Caco-2 (cell line): ENCODE measurements at regions of chr10 and their contacts with region 1.

Region 1: DNA sequence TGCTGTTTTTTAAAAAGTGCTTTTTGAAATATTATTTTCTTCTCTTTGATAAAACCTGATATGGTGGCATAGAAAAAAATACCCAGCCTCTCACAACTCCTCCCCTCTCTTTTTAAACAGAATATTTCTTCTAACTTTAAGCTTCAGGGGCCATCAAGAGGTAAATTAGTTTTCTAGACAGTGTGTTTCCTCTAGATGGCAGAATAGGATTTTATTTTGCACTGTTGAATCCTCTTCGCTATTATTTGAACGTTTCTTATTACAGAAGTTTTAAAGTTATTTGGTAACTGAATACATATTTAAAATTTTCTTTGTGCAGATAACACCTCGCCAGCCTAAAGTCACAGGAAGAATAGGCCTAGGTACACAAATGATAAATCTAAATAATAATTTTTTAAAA is 30.3 kb downstream of the ARL5B start:
- DNase-seq: no peak
- H3K4me3 ChIP-seq: no peak overlapping the region
- H3K4me3 Mint-ChIP-seq: no peak overlapping the region
- H3K27ac Mint-ChIP-seq: no peak overlapping the region
- H3K4me1 ChIP-seq: no peaks in the 10 kb centered on the region
- H3K4me1 Mint-ChIP-seq: peaks cover 7% of the 10 kb centered on the region
- H3K27me3 ChIP-seq: no peaks in the 10 kb centered on the region
- H3K27me3 Mint-ChIP-seq: no peaks in the 10 kb centered on the region
- CTCF ChIP-seq: peak; percentile 59 to 64

Region 2: GRCh38 chr10:18793951-18794350 is 104.5 kb after region 1 on chr10:
- CTCF ChIA-PET with region 1: no interaction called
- POLR2A ChIA-PET with region 1: no interaction called
- intact Hi-C with region 1: loop called (anchors 5 kb)
- DNase-seq: peak in 1 of 2 experiments; percentile 33
- H3K4me3 ChIP-seq: no peak overlapping the region
- H3K4me3 Mint-ChIP-seq: no peak overlapping the region
- H3K27ac Mint-ChIP-seq: no peak overlapping the region
- H3K4me1 ChIP-seq: no peaks in the 10 kb centered on the region
- H3K4me1 Mint-ChIP-seq: no peaks in the 10 kb centered on the region
- H3K27me3 ChIP-seq: no peaks in the 10 kb centered on the region
- H3K27me3 Mint-ChIP-seq: peaks cover 4% of the 10 kb centered on the region
- CTCF ChIP-seq: peak; percentile 62 to 71

Region 3: GRCh38 chr10:19048901-19049300 is 359.4 kb after region 1 on chr10:
- CTCF ChIA-PET with region 1: no interaction called
- POLR2A ChIA-PET with region 1: no interaction called
- intact Hi-C with region 1: loop called (anchors 5 kb)
- DNase-seq: peak in 1 of 2 experiments; percentile 26
- H3K4me3 ChIP-seq: peak overlapping the region; percentile 27
- H3K4me3 Mint-ChIP-seq: peak overlapping the region; percentile 64
- H3K27ac Mint-ChIP-seq: peak overlapping the region; percentile 13
- H3K4me1 ChIP-seq: peaks cover 11% of the 10 kb centered on the region
- H3K4me1 Mint-ChIP-seq: peaks cover 26% of the 10 kb centered on the region
- H3K27me3 ChIP-seq: no peaks in the 10 kb centered on the region
- H3K27me3 Mint-ChIP-seq: no peaks in the 10 kb centered on the region
- CTCF ChIP-seq: no peak

Region 4: DNA sequence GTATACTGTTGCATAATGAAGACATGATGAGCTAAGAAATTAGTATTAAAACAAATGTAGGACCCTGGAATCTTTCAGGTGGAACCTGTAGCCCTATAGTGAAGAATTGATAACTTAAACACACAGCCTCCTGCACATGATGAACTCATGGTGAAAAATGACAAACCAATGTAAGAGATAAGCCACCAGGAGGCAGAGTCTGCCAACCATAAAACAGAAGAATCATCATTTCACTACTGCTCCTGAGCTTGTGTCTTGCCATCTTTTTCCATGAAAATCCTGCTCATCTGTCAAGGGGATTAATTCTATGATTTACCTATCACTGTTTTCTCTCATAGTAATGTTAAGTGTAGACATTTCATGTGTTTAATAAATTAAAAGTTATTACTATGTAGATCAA is 723.0 kb after region 1 on chr10:
- CTCF ChIA-PET with region 1: no interaction called
- POLR2A ChIA-PET with region 1: no interaction called
- intact Hi-C with region 1: loop called (anchors 1 kb)
- DNase-seq: peak in 1 of 2 experiments; percentile 30
- H3K4me3 ChIP-seq: no peak overlapping the region
- H3K4me3 Mint-ChIP-seq: no peak overlapping the region
- H3K27ac Mint-ChIP-seq: no peak overlapping the region
- H3K4me1 ChIP-seq: no peaks in the 10 kb centered on the region
- H3K4me1 Mint-ChIP-seq: no peaks in the 10 kb centered on the region
- H3K27me3 ChIP-seq: no peaks in the 10 kb centered on the region
- H3K27me3 Mint-ChIP-seq: no peaks in the 10 kb centered on the region
- CTCF ChIP-seq: peak; percentile 28 to 53

Region 5: GRCh38 chr10:19788075-19788686 is 1098.7 kb after region 1 on chr10:
- CTCF ChIA-PET with region 1: no interaction called
- POLR2A ChIA-PET with region 1: no interaction called
- intact Hi-C with region 1: loop called (anchors 1 kb)
- DNase-seq: peak in 1 of 2 experiments; percentile 61
- H3K4me3 ChIP-seq: no peak overlapping the region
- H3K4me3 Mint-ChIP-seq: no peak overlapping the region
- H3K27ac Mint-ChIP-seq: no peak overlapping the region
- H3K4me1 ChIP-seq: 0 out of 2 replicates have a peak, but pooled peaks cover 3% of the 10 kb centered on the region
- H3K4me1 Mint-ChIP-seq: no peaks in the 10 kb centered on the region
- H3K27me3 ChIP-seq: no peaks in the 10 kb centered on the region
- H3K27me3 Mint-ChIP-seq: no peaks in the 10 kb centered on the region
- CTCF ChIP-seq: peak; percentile 85 to 97